ENCODE measurements at regions of chr12 and their contacts with region 1.

Region 1: DNA sequence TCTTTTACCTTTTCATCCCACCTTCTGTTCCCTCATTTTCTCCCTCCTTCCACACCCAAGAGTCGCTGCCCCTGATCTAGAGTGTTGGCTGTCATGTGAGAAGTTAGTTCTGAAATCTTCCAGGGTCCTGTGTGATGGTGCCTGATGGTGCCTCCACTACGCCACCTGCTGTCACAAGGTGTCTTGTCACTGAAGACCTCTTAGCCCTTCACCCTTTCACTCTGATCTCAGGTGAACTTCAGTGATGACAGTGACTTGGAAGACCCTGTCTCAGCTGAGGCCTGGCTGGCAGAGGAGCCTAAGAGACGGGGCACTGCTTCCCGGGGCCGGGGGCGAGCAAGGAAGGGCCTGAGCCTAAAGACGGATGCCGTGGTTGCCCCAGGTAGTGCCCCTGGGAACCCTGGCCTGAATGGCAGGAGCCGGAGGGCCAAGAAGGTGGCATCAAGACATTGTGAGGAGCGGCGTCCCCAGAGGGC is 7.6 kb upstream of the PFDN5 start:
- DNase-seq: no peak
- H3K4me3 ChIP-seq: no peak overlapping the region
- H3K27ac ChIP-seq: no peak overlapping the region
- H3K4me1 ChIP-seq: peaks cover 7% of the 10 kb centered on the region
- H3K27me3 ChIP-seq: no peaks in the 10 kb centered on the region
- CTCF ChIP-seq: peak; percentile 67 to 78 (median 68)
- POLR2A ChIP-seq: no peak

Region 2: DNA sequence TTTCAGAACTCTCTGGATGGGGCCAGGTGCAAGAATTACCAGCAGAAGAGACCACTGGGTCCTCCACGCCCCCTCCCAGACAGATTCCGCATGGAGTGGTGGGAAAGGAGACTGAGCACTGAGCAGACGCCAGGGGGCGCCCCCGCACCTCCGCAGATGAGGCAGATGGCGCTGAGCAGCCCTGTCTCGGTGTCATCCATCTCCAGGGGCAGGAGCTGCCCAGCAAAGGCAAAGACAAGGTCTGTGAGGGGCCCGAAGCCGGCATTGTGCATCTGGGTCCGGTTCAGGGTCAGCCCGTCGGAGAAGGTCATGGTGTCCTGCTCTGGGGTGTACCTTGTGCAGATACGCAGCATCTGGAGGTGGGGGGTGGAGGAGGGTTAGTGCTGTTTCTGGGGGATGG is 74.4 kb before region 1 on chr12:
- intact Hi-C with region 1: loop called (anchors 5 kb)
- DNase-seq: no peak
- H3K4me3 ChIP-seq: no peak overlapping the region
- H3K27ac ChIP-seq: peak overlapping the region; percentile 99
- H3K4me1 ChIP-seq: peaks cover 64% of the 10 kb centered on the region
- H3K27me3 ChIP-seq: no peaks in the 10 kb centered on the region
- CTCF ChIP-seq: peak; percentile 92 to 98 (median 96)
- POLR2A ChIP-seq: no peak

Region 3: DNA sequence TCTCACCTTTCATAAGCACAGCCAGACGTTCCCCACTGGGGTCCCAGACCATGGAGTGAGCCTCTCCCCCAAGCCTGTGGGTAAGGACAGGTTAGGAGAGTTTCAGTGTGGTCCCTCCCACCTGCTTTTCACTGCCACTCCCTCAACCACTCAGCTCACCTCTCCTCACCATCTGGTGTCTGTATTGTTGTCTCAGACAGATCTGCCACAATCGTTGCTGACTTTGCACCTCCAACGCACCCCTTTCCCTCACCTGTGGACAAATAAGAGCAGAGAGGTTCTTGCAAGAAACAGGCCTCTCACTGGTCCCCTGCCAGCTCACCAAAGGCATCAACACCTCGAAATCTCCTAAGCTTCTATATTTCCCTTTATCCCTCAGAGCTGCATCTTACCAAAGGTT is 20.5 kb after region 1 on chr12:
- intact Hi-C with region 1: loop called (anchors 2 kb)
- DNase-seq: no peak
- H3K4me3 ChIP-seq: no peak overlapping the region
- H3K27ac ChIP-seq: no peak overlapping the region
- H3K4me1 ChIP-seq: no peaks in the 10 kb centered on the region
- H3K27me3 ChIP-seq: no peaks in the 10 kb centered on the region
- CTCF ChIP-seq: no peak
- POLR2A ChIP-seq: no peak

Measured in vagina (tissue), 2 donors.